ENCODE measurements at regions of chr11 and their contacts with region 1.

Region 1: GRCh38 chr11:20656901-20657300 is 12.5 kb upstream of the NELL1 start:
- DNase-seq: no peak
- ATAC-seq: 0 out of 2 replicates have a peak, but pooled peaks have one; percentile 24
- H3K4me3 Mint-ChIP-seq: no peak overlapping the region
- H3K27ac Mint-ChIP-seq: no peak overlapping the region
- H3K4me1 Mint-ChIP-seq: peaks cover 28% of the 10 kb centered on the region
- H3K27me3 Mint-ChIP-seq: no peaks in the 10 kb centered on the region; the same call in 1 of the 2 replicates
- CTCF ChIP-seq: no peak

Region 2: GRCh38 chr11:20530942-20531689 is 125.8 kb before region 1 on chr11:
- CTCF ChIA-PET with region 1: no interaction called
- POLR2A ChIA-PET with region 1: no interaction called
- DNase-seq: no peak
- ATAC-seq: no peak
- H3K4me3 Mint-ChIP-seq: no peak overlapping the region
- H3K27ac Mint-ChIP-seq: no peak overlapping the region
- H3K4me1 Mint-ChIP-seq: peaks cover 8% of the 10 kb centered on the region; the same call in 1 of the 2 replicates
- H3K27me3 Mint-ChIP-seq: no peaks in the 10 kb centered on the region; the same call in 1 of the 2 replicates
- CTCF ChIP-seq: no peak

Region 3: GRCh38 chr11:20584093-20584774 is 72.7 kb before region 1 on chr11:
- CTCF ChIA-PET with region 1: no interaction called
- POLR2A ChIA-PET with region 1: no interaction called
- DNase-seq: no peak
- ATAC-seq: no peak
- H3K4me3 Mint-ChIP-seq: no peak overlapping the region
- H3K27ac Mint-ChIP-seq: no peak overlapping the region
- H3K4me1 Mint-ChIP-seq: no peaks in the 10 kb centered on the region
- H3K27me3 Mint-ChIP-seq: no peaks in the 10 kb centered on the region; the same call in 1 of the 2 replicates
- CTCF ChIP-seq: no peak

Region 4: GRCh38 chr11:20671856-20672546 is 15.1 kb after region 1 on chr11:
- CTCF ChIA-PET with region 1: interaction called, 33 read pairs
- POLR2A ChIA-PET with region 1: no interaction called
- DNase-seq: no peak
- ATAC-seq: peak; percentile 9; the same call in 1 of the 2 replicates
- H3K4me3 Mint-ChIP-seq: peak overlapping the region; percentile 82
- H3K27ac Mint-ChIP-seq: no peak overlapping the region
- H3K4me1 Mint-ChIP-seq: peaks cover 43% of the 10 kb centered on the region
- H3K27me3 Mint-ChIP-seq: peaks cover 58% of the 10 kb centered on the region
- CTCF ChIP-seq: no peak

Region 5: GRCh38 chr11:20723366-20723765 is 66.5 kb after region 1 on chr11:
- CTCF ChIA-PET with region 1: no interaction called
- POLR2A ChIA-PET with region 1: no interaction called
- DNase-seq: no peak
- ATAC-seq: no peak
- H3K4me3 Mint-ChIP-seq: no peak overlapping the region
- H3K27ac Mint-ChIP-seq: no peak overlapping the region
- H3K4me1 Mint-ChIP-seq: peaks cover 8% of the 10 kb centered on the region
- H3K27me3 Mint-ChIP-seq: no peaks in the 10 kb centered on the region
- CTCF ChIP-seq: no peak

Region 6: DNA sequence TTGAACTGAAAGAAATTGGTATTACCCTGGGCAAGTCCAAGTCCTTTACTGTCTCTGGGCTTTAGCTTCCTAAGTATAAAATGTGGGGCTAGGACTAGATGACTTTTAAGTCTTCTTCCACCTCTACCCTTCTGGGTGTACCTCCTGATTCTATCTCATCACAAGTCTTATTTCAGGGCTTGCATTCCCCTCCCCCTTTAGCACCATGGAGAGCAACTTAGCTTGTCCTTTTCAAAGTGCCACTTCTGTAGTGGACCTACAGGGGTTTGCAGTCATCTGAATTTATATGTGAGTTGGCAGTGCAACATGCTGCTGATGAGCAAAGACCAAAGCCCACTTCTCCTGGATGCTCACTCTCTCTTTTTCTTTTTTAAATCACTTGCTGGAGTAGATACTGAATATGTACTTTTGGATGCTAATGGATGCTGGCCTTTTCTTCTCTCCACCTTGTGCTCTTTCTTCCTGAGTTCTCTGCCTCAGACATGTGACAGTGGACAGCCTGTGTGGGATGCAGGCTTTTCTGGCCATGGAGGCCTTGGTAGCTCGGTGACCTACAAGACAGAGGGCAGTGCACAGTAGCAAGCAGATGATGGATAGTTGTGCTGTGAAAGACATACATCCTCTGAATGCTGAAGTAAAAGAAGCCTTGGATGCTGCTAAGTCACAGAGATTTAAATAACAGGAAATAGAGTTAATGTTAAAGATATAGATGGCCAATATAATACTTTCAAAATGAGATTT is 197.5 kb after region 1 on chr11:
- CTCF ChIA-PET with region 1: no interaction called
- POLR2A ChIA-PET with region 1: no interaction called
- DNase-seq: peak; percentile 16
- ATAC-seq: peak; percentile 62
- H3K4me3 Mint-ChIP-seq: no peak overlapping the region
- H3K27ac Mint-ChIP-seq: no peak overlapping the region
- H3K4me1 Mint-ChIP-seq: peaks cover 2% of the 10 kb centered on the region
- H3K27me3 Mint-ChIP-seq: no peaks in the 10 kb centered on the region
- CTCF ChIP-seq: no peak